PC-9 (cell line): ENCODE measurements at regions of chr9 and their contacts with region 1.

Region 1: DNA sequence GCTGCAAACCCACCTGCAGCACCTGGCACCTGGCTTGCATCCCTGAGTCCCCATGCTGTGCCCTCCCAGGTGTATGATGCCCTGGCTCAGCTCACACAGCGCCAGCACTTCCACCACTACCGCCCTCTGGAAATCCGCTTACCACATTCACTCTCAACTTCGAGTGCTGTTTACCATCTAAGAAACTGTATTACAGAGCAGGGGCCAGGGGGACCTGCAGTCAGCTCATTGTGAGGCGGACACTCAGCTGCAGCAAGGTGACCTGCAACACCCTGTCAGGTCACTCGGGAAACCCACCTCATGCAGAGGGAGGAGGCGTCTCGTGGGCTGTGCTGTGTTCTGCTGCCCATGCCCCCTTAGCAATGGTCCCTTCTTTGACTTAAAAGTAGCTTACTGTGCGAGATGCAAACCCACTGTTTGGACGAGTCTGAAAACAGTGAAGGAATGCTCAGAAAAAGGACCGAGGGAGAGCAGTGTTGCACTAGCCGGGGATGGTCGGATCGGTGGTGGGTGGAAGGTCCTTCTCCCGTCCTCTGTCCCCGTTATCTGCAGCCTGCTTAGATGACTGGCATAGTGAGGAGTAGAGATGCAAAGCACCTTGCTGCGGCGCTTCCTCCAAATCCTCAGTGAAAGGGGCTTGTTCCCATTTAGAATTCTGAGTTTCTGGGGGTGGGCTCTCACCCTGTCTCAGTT is 55.2 kb upstream of the CTSL start:
- DNase-seq: no peak
- H3K4me3 ChIP-seq: no peak overlapping the region
- H3K27ac ChIP-seq: no peak overlapping the region
- H3K4me1 ChIP-seq: no peaks in the 10 kb centered on the region
- H3K27me3 ChIP-seq: no peaks in the 10 kb centered on the region
- CTCF ChIP-seq: no peak

Region 2: GRCh38 chr9:86948074-86948929 is 722.4 kb before region 1 on chr9:
- CTCF ChIA-PET with region 1: interaction called, 12 read pairs
- POLR2A ChIA-PET with region 1: no interaction called
- intact Hi-C with region 1: no loop called
- DNase-seq: peak; percentile 57
- H3K4me3 ChIP-seq: peak overlapping the region; percentile 63
- H3K27ac ChIP-seq: no peak overlapping the region
- H3K4me1 ChIP-seq: 0 out of 2 replicates have a peak, but pooled peaks cover 4% of the 10 kb centered on the region
- H3K27me3 ChIP-seq: no peaks in the 10 kb centered on the region
- CTCF ChIP-seq: peak; percentile 77